OCI-LY7 (cell line): ENCODE measurements at regions of chr18 and their contacts with region 1.

Region 1: DNA sequence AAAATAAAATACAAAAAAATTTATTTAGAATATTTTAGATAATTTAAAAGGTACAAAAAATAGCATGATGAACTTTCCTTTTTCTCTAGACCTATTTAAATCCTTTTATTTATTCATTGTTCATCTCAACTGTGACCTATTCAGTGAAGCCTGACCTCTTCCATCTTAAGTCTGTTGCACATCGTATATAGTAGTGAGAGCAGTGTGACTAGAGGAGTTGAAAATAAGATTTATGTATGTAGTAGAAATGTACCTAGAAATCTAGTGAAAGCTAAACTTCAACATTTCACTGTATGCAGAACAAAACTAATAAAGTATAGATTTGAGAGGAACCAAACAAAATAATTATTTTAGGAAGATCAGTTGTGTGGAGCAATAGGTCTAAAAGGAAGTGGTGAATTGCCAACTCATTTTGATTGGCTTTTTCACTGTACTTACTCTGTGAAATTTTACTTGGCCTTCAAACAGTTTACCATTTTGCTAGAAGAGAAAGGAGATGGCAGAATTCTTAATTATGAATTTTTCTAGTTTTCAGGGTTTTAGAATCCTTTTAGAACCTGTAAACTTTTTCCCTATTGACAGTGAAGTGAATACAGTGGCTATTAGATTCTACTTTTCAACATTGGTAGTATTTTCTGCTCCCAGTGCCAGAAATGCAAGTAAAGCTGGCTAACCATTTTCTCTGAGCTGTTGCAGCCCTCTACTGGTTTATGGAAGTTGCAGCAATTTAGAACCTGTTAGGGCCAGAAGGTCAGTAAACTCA is 11.0 kb downstream of the ANKRD12 start:
- DNase-seq: peak; percentile 80
- H3K4me3 ChIP-seq: peak overlapping the region; percentile 33
- H3K27ac ChIP-seq: peak overlapping the region; percentile 70
- H3K4me1 ChIP-seq: peaks cover 53% of the 10 kb centered on the region
- CTCF ChIP-seq: peak; percentile 98

Region 2: GRCh38 chr18:8609659-8610458 is 537.8 kb before region 1 on chr18:
- CTCF ChIA-PET with region 1: no interaction called
- POLR2A ChIA-PET with region 1: no interaction called
- intact Hi-C with region 1: loop called (anchors 5 kb)
- DNase-seq: peak; percentile 40
- H3K4me3 ChIP-seq: peak overlapping the region; percentile 89
- H3K27ac ChIP-seq: peak overlapping the region; percentile 17
- H3K4me1 ChIP-seq: peaks cover 50% of the 10 kb centered on the region
- CTCF ChIP-seq: no peak

Region 3: DNA sequence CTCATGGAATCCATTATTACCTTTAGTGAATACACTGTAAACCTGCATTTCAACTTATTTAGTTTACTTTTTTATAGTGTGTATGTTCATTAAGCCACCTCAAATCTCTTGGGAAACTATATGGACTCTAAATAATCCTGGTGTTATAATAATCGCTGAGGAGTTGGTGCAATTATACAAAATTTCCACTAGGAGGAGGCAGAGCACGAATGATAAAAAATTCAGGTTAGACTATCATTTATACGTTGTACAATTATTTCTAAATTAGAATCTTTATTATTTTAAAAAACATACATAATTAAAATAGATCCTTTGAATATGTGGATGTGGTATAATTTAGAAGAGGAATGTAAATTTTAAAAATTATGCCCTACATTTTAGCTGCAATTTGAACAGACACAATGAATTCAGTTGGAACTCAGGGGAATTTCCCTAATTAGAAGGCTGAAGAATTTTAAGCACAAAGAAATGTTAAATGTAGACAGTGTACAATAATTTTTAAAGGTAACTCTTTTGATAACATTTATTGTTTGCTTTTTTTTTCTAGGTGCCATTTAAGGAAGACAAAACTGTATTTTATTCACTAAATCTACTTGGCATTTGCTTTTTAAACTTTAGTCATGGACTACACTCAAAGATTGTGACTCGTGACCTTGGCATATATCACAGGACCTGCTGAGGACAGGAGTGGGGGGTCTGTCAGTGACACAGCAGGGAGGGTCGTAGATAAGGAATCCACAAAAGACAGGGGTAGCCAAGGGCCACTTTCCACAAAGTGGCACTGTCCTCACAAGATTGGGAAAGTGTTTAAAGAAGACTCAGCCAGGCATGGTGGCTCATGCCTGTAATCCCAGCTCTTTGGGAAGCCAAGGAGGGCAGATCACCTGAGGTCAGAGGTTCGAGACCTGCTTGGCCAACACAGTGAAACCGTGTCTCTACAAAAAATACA is 492.8 kb before region 1 on chr18:
- CTCF ChIA-PET with region 1: no interaction called
- POLR2A ChIA-PET with region 1: no interaction called
- intact Hi-C with region 1: loop called (anchors 2 kb)
- DNase-seq: peak; percentile 55
- H3K4me3 ChIP-seq: no peak overlapping the region
- H3K27ac ChIP-seq: no peak overlapping the region
- H3K4me1 ChIP-seq: peaks cover 5% of the 10 kb centered on the region
- CTCF ChIP-seq: peak; percentile 91

Region 4: DNA sequence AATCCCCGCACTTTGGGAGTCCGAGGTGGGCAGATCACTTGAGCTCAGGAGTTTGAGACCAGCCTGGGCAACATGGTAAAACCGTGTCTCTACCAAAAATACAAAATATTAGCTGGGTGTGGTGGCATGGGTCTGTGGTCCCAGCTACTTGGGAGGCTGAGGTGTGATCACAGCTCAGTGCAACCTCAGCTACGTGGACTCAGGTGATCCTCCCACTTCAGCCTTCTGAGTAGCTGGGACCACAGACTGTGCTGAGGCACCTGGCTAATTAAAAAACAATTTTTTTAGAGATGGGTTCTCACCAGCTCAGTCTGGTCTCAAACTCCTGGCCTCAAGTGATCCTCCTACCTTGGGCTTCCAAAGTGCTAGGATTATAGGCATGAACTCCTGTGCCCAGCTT is 12.4 kb after region 1 on chr18:
- CTCF ChIA-PET with region 1: no interaction called
- POLR2A ChIA-PET with region 1: interaction called, 12 read pairs
- intact Hi-C with region 1: no loop called
- DNase-seq: no peak
- H3K4me3 ChIP-seq: no peak overlapping the region
- H3K27ac ChIP-seq: no peak overlapping the region
- H3K4me1 ChIP-seq: no peaks in the 10 kb centered on the region
- CTCF ChIP-seq: no peak